MCF 10A (cell line): ENCODE measurements at regions of chrX and their contacts with region 1.

Region 1: GRCh38 chrX:20530406-20530921 is 263.8 kb upstream of the RPS6KA3 start:
- DNase-seq: peak; percentile 58
- H3K4me3 Mint-ChIP-seq: no peak overlapping the region
- H3K27ac Mint-ChIP-seq: no peak overlapping the region
- H3K4me1 Mint-ChIP-seq: no peaks in the 10 kb centered on the region
- H3K27me3 Mint-ChIP-seq: peaks cover 52% of the 10 kb centered on the region
- CTCF ChIP-seq: peak; percentile 71

Region 2: GRCh38 chrX:19462231-19462630 is 1068.2 kb before region 1 on chrX:
- CTCF ChIA-PET with region 1: no interaction called
- POLR2A ChIA-PET with region 1: no interaction called
- intact Hi-C with region 1: no loop called
- DNase-seq: no peak
- H3K4me3 Mint-ChIP-seq: no peak overlapping the region
- H3K27ac Mint-ChIP-seq: no peak overlapping the region
- H3K4me1 Mint-ChIP-seq: no peaks in the 10 kb centered on the region
- H3K27me3 Mint-ChIP-seq: peaks cover 33% of the 10 kb centered on the region
- CTCF ChIP-seq: no peak

Region 3: GRCh38 chrX:21354725-21355124 is 824.3 kb after region 1 on chrX:
- CTCF ChIA-PET with region 1: interaction called, 19 read pairs
- POLR2A ChIA-PET with region 1: no interaction called
- intact Hi-C with region 1: loop called (anchors 1 kb)
- DNase-seq: peak; percentile 25
- H3K4me3 Mint-ChIP-seq: no peak overlapping the region
- H3K27ac Mint-ChIP-seq: no peak overlapping the region
- H3K4me1 Mint-ChIP-seq: no peaks in the 10 kb centered on the region
- H3K27me3 Mint-ChIP-seq: no peaks in the 10 kb centered on the region
- CTCF ChIP-seq: peak; percentile 20

Region 4: DNA sequence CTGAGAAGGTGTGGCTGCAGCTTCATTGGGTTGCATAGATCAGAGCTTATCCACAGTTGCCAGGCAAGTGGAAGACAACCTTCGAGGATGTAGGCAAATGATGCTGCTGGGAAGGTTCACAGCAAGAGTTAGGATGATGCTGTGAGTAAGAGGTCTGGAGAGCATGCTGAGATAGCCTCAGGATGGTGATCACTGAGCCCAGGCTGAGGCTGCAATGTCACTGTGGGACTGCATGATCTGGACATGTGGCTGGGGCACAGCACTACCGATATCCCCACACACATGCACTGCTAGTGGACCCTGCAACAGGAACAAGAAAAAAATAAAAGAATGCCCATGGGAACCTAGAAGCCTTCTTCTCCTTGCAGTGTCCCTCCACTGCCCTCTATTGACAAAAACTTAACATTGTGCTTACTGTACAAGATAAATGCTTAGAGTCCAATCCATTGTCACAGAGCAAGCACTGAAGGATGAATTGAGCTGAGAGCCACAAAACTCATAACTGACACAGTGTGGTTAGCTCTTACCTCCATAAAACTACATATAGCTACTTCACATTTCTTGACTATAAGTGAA is 949.3 kb after region 1 on chrX:
- CTCF ChIA-PET with region 1: interaction called, 125 read pairs
- POLR2A ChIA-PET with region 1: interaction called, 5 read pairs
- intact Hi-C with region 1: loop called (anchors 1 kb)
- DNase-seq: peak; percentile 54
- H3K4me3 Mint-ChIP-seq: no peak overlapping the region
- H3K27ac Mint-ChIP-seq: no peak overlapping the region
- H3K4me1 Mint-ChIP-seq: no peaks in the 10 kb centered on the region
- H3K27me3 Mint-ChIP-seq: peaks cover 37% of the 10 kb centered on the region
- CTCF ChIP-seq: peak; percentile 70

Region 5: DNA sequence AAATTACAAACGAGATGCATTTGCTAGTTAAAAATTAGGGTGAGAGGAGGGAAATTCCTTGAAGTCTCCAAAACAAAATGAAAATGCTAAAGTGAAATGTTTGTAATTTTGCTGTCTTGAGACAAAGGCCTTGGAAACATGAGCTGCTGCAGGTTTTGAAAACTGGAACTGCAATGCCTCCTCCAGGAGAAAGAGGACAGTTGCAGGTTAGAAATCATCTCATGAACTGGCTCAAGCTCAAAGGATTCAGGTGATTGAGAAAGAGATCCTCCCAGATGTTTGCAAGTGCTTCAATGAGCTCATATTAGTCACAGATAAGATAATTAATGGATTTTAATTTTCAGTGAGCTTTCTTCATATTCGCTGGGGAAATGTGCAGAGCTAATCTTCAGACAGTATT is 1195.0 kb after region 1 on chrX:
- CTCF ChIA-PET with region 1: interaction called, 18 read pairs
- POLR2A ChIA-PET with region 1: no interaction called
- intact Hi-C with region 1: loop called (anchors 1 kb)
- DNase-seq: peak; percentile 66
- H3K4me3 Mint-ChIP-seq: no peak overlapping the region
- H3K27ac Mint-ChIP-seq: no peak overlapping the region
- H3K4me1 Mint-ChIP-seq: no peaks in the 10 kb centered on the region
- H3K27me3 Mint-ChIP-seq: peaks cover 54% of the 10 kb centered on the region
- CTCF ChIP-seq: peak; percentile 21

Region 6: GRCh38 chrX:21745756-21746155 is 1215.3 kb after region 1 on chrX:
- CTCF ChIA-PET with region 1: interaction called, 8 read pairs
- POLR2A ChIA-PET with region 1: no interaction called
- intact Hi-C with region 1: loop called (anchors 1 kb)
- DNase-seq: peak; percentile 47
- H3K4me3 Mint-ChIP-seq: no peak overlapping the region
- H3K27ac Mint-ChIP-seq: no peak overlapping the region
- H3K4me1 Mint-ChIP-seq: no peaks in the 10 kb centered on the region
- H3K27me3 Mint-ChIP-seq: peaks cover 72% of the 10 kb centered on the region
- CTCF ChIP-seq: peak; percentile 46

Region 7: GRCh38 chrX:21972721-21973120 is 1442.3 kb after region 1 on chrX:
- CTCF ChIA-PET with region 1: interaction called, 7 read pairs
- POLR2A ChIA-PET with region 1: no interaction called
- intact Hi-C with region 1: loop called (anchors 1 kb)
- DNase-seq: no peak
- H3K4me3 Mint-ChIP-seq: no peak overlapping the region
- H3K27ac Mint-ChIP-seq: no peak overlapping the region
- H3K4me1 Mint-ChIP-seq: peaks cover 6% of the 10 kb centered on the region
- H3K27me3 Mint-ChIP-seq: peaks cover 65% of the 10 kb centered on the region
- CTCF ChIP-seq: no peak